GM12878 (cell line): ENCODE measurements at regions of chr10 and their contacts with region 1.

Region 1: GRCh38 chr10:24383681-24384106 is 174.8 kb downstream of the KIAA1217 start:
- DNase-seq: peak; percentile 86
- ATAC-seq: peak; percentile 84
- H3K4me3 ChIP-seq: no peak overlapping the region
- H3K27ac ChIP-seq: peak overlapping the region; percentile 67
- H3K4me1 ChIP-seq: peaks cover 14% of the 10 kb centered on the region
- H3K27me3 ChIP-seq: no peaks in the 10 kb centered on the region
- CTCF ChIP-seq: peak; percentile 31 to 47 (median 39); a peak in 5 of 6 replicates
- EP300 ChIP-seq: peak; percentile 85 to 86; a peak in 3 of 4 replicates
- POLR2A ChIP-seq: no peak
- RAD21 ChIP-seq: peak; percentile 35

Region 2: GRCh38 chr10:22823109-22823508 is 1560.6 kb before region 1 on chr10:
- CTCF ChIA-PET with region 1: no interaction called
- POLR2A ChIA-PET with region 1: no interaction called
- RAD21 ChIA-PET with region 1: no interaction called
- SMC1A ChIA-PET with region 1: no interaction called
- in situ Hi-C with region 1: no loop called
- intact Hi-C with region 1: loop called (anchors 5 kb)
- DNase-seq: peak; percentile 23
- ATAC-seq: peak; percentile 97
- H3K4me3 ChIP-seq: no peak overlapping the region
- H3K27ac ChIP-seq: no peak overlapping the region
- H3K4me1 ChIP-seq: no peaks in the 10 kb centered on the region
- H3K27me3 ChIP-seq: no peaks in the 10 kb centered on the region
- CTCF ChIP-seq: no peak
- EP300 ChIP-seq: no peak
- POLR2A ChIP-seq: no peak
- RAD21 ChIP-seq: no peak

Region 3: GRCh38 chr10:24209946-24210491 is 173.7 kb before region 1 on chr10:
- CTCF ChIA-PET with region 1: no interaction called
- POLR2A ChIA-PET with region 1: interaction called, 5 read pairs
- RAD21 ChIA-PET with region 1: interaction called, 9 read pairs
- SMC1A ChIA-PET with region 1: interaction called, 10 read pairs
- in situ Hi-C with region 1: no loop called
- intact Hi-C with region 1: loop called (anchors 1 kb)
- DNase-seq: peak; percentile 82
- ATAC-seq: peak; percentile 75
- H3K4me3 ChIP-seq: peak overlapping the region; percentile 62
- H3K27ac ChIP-seq: peak overlapping the region; percentile 62
- H3K4me1 ChIP-seq: peaks cover 9% of the 10 kb centered on the region
- H3K27me3 ChIP-seq: no peaks in the 10 kb centered on the region
- CTCF ChIP-seq: no peak
- EP300 ChIP-seq: peak; percentile 74 to 87; a peak in 2 of 4 replicates
- POLR2A ChIP-seq: no peak
- RAD21 ChIP-seq: no peak

Region 4: GRCh38 chr10:24503461-24504320 is 120.0 kb after region 1 on chr10:
- CTCF ChIA-PET with region 1: interaction called, 6 read pairs
- POLR2A ChIA-PET with region 1: no interaction called
- RAD21 ChIA-PET with region 1: interaction called, 3 read pairs
- SMC1A ChIA-PET with region 1: interaction called, 6 read pairs
- in situ Hi-C with region 1: no loop called
- intact Hi-C with region 1: loop called (anchors 5 kb)
- DNase-seq: peak; percentile 36
- ATAC-seq: peak; percentile 93
- H3K4me3 ChIP-seq: no peak overlapping the region
- H3K27ac ChIP-seq: no peak overlapping the region
- H3K4me1 ChIP-seq: no peaks in the 10 kb centered on the region
- H3K27me3 ChIP-seq: no peaks in the 10 kb centered on the region; a peak in 1 of 4 replicates
- CTCF ChIP-seq: peak; percentile 50 to 73 (median 60); a peak in 5 of 6 replicates
- EP300 ChIP-seq: no peak
- POLR2A ChIP-seq: no peak
- RAD21 ChIP-seq: peak; percentile 92